Ovary (tissue), 10 donors: ENCODE measurements at regions of chr9 and their contacts with region 1.

Region 1: DNA sequence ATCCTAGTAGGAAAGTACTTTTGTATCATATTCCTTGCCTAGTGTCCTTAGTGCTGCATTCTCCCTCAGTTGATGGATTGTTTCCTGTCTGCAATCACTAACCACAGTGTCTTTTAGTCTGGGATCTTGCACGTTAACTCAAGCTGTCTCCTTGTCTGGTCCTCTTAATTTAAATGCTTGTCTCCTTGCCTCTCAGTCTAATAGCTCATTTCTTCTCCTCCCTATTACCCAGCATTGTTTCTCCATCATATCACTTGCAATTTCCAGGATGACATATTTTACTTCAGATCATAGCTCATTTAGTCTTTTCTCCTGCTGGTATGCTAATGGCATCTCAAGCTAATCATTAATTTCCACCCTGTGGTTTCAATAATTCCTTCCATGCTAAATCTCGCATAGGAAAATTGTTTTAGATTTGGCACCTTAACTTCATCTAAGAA is 2052.0 kb upstream of the C9orf72 start:
- DNase-seq: no peak
- H3K4me3 ChIP-seq: no peak overlapping the region
- H3K27ac ChIP-seq: no peak overlapping the region
- H3K4me1 ChIP-seq: no peaks in the 10 kb centered on the region
- H3K27me3 ChIP-seq: no peaks in the 10 kb centered on the region
- CTCF ChIP-seq: no peak
- EP300 ChIP-seq: no peak
- POLR2A ChIP-seq: no peak

Region 2: DNA sequence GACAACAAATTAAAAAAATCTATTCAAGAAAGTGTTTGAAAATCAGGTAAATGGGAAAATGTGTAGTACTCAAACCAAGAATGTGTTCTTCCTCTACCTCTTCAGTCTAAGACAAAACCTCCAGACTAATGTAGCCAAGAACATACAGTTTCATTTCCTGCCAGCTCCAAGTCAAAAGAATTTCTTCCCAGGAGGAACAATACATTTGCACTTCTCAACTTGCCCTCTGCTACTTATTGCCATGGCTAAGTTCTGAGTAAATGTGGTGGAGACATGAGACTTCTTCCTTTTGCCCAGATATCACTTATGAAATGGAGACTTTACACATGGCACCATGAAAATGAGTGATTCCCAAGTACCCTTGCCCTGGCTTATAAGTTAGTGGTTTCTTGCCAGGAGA is 60.2 kb after region 1 on chr9:
- intact Hi-C with region 1: loop called in 1 of 4 experiments (anchors 10 kb)
- DNase-seq: no peak
- H3K4me3 ChIP-seq: no peak overlapping the region
- H3K27ac ChIP-seq: no peak overlapping the region
- H3K4me1 ChIP-seq: no peaks in the 10 kb centered on the region
- H3K27me3 ChIP-seq: no peaks in the 10 kb centered on the region
- CTCF ChIP-seq: no peak
- EP300 ChIP-seq: no peak
- POLR2A ChIP-seq: no peak

Region 3: DNA sequence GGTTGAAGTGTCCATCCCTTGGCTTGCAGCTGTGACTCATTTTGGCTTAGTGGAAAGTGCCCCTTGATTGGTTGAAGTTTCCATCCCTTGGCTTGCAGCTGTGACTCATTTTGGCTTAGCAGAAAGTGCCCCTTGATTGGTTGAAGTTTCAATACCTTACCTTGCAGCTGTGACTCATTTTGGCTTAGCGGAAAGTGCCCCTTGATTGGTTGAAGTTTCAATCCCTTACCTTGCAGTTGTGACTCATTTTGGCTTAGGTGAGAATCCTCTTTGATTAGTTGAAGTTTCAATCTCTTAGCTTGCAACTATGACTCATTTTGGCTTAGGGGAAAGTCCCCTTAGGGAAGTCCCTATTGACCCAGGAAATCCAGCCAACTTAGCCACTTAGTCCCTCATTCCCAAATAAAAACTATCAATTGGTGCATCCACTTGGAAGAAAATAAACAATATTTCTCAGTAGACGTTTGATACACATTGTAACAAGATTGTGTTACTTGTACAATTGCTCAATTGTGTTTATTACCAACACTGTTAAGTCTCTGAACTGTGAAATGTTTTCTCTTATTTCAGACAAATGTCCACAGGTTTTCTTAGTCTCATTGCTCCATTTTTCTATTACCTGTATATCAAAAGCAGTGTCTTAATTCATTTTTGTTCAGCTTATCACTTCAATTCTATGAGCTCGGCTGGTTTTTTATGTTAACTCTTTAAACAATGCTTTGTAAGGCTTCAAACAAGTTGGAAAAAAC is 450.3 kb after region 1 on chr9:
- intact Hi-C with region 1: no loop called
- DNase-seq: no peak
- H3K4me3 ChIP-seq: no peak overlapping the region
- H3K27ac ChIP-seq: no peak overlapping the region
- H3K4me1 ChIP-seq: no peaks in the 10 kb centered on the region
- H3K27me3 ChIP-seq: no peaks in the 10 kb centered on the region
- CTCF ChIP-seq: no peak
- EP300 ChIP-seq: no peak
- POLR2A ChIP-seq: no peak

Region 4: DNA sequence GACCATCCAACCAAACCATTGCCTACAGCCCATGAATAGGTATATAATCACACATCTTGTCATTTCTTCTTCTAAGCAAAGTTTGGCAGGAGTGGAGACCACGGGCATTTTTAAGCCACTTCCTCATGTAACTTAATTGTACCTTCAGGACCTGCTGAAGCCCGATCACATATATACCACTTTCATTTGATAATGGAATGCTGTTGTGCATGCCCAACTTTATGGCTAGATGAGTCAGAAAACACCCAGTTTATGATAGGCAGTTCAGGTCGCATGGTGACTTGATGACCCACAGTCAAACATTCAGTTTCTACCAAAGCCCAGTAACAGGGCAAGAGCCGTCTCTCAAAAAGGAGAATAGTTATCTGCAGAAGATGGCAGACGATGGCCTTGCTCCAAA is 464.1 kb after region 1 on chr9:
- intact Hi-C with region 1: no loop called
- DNase-seq: no peak
- H3K4me3 ChIP-seq: no peak overlapping the region
- H3K27ac ChIP-seq: no peak overlapping the region
- H3K4me1 ChIP-seq: no peaks in the 10 kb centered on the region
- H3K27me3 ChIP-seq: no peaks in the 10 kb centered on the region
- CTCF ChIP-seq: no peak
- EP300 ChIP-seq: no peak
- POLR2A ChIP-seq: no peak